Activated B cell treated with CpG ODN at 0.5 μM for 24 hours (primary cell): ENCODE measurements at regions of chr21 and their contacts with region 1.

Region 1: GRCh38 chr21:45478115-45478801 is 64.0 kb downstream of the SLC19A1 start:
- DNase-seq: peak; percentile 64
- ATAC-seq: peak; percentile 87
- H3K4me3 Mint-ChIP-seq: peak overlapping the region; percentile 73
- H3K27ac Mint-ChIP-seq: peak overlapping the region; percentile 85
- H3K4me1 Mint-ChIP-seq: peaks cover 40% of the 10 kb centered on the region
- H3K27me3 Mint-ChIP-seq: no peaks in the 10 kb centered on the region
- CTCF ChIP-seq: no peak

Region 2: DNA sequence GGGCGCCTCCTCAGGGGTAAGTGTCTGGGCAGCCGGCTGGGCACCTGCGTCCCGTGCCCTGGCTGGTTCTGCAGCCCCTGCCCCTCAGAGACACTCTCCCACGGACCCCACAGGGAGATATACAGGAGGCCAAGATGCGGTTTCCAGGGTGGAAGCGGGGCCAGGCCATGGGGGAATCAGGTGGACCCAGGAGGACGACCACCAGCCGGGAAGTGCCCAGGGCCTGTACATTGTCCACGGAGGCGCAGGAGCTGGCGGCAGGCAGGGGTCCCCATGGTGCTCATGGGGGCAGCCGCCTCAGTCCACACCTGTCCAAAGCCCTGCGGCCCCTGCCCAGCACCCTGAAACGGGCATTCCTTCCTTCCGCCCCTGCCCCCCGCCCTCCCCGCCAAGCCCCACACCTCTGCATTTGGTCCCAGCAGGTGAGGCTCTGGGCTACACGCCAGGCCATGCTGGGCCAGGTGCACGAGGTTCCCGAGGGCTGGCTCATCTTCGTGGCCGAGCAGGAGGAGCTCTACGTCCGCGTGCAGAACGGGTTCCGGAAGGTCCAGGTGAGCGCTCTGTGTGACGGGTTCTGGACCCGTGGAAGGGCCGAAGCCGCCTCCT is 27.3 kb after region 1 on chr21:
- CTCF ChIA-PET with region 1: no interaction called
- POLR2A ChIA-PET with region 1: no interaction called
- intact Hi-C with region 1: no loop called
- DNase-seq: no peak
- ATAC-seq: no peak
- H3K4me3 Mint-ChIP-seq: no peak overlapping the region
- H3K27ac Mint-ChIP-seq: no peak overlapping the region
- H3K4me1 Mint-ChIP-seq: no peaks in the 10 kb centered on the region
- H3K27me3 Mint-ChIP-seq: no peaks in the 10 kb centered on the region
- CTCF ChIP-seq: no peak

Region 3: GRCh38 chr21:45542242-45542666 is 64.0 kb after region 1 on chr21 and contains the start of gene SLC19A1:
- CTCF ChIA-PET with region 1: no interaction called
- POLR2A ChIA-PET with region 1: no interaction called
- intact Hi-C with region 1: loop called (anchors 5 kb)
- DNase-seq: peak; percentile 81
- ATAC-seq: peak; percentile 94
- H3K4me3 Mint-ChIP-seq: peak within 1 kb of the TSS; percentile 77
- H3K27ac Mint-ChIP-seq: no peak within 1 kb of the TSS
- H3K4me1 Mint-ChIP-seq: peaks cover 4% of the 10 kb centered on the region
- H3K27me3 Mint-ChIP-seq: no peaks in the 10 kb centered on the region
- CTCF ChIP-seq: no peak
- total RNA-seq, gene SLC19A1: 7.4 and 10.7 TPM in 2 replicates

Region 4: DNA sequence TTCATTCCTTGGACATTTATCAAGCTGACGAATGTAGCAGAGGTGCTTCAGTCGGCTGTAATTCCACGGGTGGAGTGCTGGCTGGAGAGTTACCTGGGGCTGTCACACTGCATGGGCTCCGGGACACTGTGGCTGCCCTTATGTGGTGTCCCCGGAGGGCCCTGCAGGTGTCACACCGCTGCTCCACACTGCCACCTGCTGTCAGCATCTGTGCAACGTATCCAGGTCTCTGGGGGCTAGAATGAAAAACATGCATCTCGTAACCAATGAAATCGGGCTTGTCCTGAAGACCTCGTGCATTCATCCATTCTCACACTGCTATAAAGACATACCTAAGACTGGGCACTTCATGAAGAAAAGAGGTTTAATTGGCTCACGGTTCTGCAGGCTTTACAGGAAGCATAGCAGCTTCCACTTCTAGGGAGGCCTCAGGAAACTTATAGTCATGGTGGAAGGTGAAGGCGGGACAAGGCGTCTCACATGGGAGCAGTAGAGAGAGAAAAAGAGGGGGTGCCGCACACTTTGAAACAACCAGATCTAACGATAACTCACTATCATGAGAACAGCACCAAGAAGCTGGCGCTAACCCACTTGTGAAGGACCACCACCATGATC is 118.6 kb after region 1 on chr21:
- CTCF ChIA-PET with region 1: interaction called, 12 read pairs
- POLR2A ChIA-PET with region 1: no interaction called
- intact Hi-C with region 1: loop called (anchors 1 kb)
- DNase-seq: peak; percentile 74
- ATAC-seq: peak; percentile 82
- H3K4me3 Mint-ChIP-seq: no peak overlapping the region
- H3K27ac Mint-ChIP-seq: no peak overlapping the region
- H3K4me1 Mint-ChIP-seq: peaks cover 10% of the 10 kb centered on the region
- H3K27me3 Mint-ChIP-seq: peaks cover 13% of the 10 kb centered on the region
- CTCF ChIP-seq: no peak

Region 5: GRCh38 chr21:45820171-45821091 is 342.2 kb after region 1 on chr21:
- CTCF ChIA-PET with region 1: interaction called, 5 read pairs
- POLR2A ChIA-PET with region 1: no interaction called
- intact Hi-C with region 1: loop called (anchors 1 kb)
- DNase-seq: peak; percentile 60
- ATAC-seq: peak; percentile 73
- H3K4me3 Mint-ChIP-seq: no peak overlapping the region
- H3K27ac Mint-ChIP-seq: no peak overlapping the region
- H3K4me1 Mint-ChIP-seq: peaks cover 3% of the 10 kb centered on the region
- H3K27me3 Mint-ChIP-seq: peaks cover 23% of the 10 kb centered on the region
- CTCF ChIP-seq: no peak

Region 6: GRCh38 chr21:45880097-45881068 is 402.1 kb after region 1 on chr21:
- CTCF ChIA-PET with region 1: no interaction called
- POLR2A ChIA-PET with region 1: no interaction called
- intact Hi-C with region 1: loop called (anchors 1 kb)
- DNase-seq: no peak
- ATAC-seq: peak; percentile 66
- H3K4me3 Mint-ChIP-seq: no peak overlapping the region
- H3K27ac Mint-ChIP-seq: no peak overlapping the region
- H3K4me1 Mint-ChIP-seq: peaks cover 5% of the 10 kb centered on the region
- H3K27me3 Mint-ChIP-seq: peaks cover 4% of the 10 kb centered on the region
- CTCF ChIP-seq: no peak

Region 7: GRCh38 chr21:45923146-45923545 is 444.9 kb after region 1 on chr21:
- CTCF ChIA-PET with region 1: no interaction called
- POLR2A ChIA-PET with region 1: no interaction called
- intact Hi-C with region 1: loop called (anchors 2 kb)
- DNase-seq: no peak
- ATAC-seq: peak; percentile 50
- H3K4me3 Mint-ChIP-seq: no peak overlapping the region
- H3K27ac Mint-ChIP-seq: no peak overlapping the region
- H3K4me1 Mint-ChIP-seq: peaks cover 2% of the 10 kb centered on the region
- H3K27me3 Mint-ChIP-seq: no peaks in the 10 kb centered on the region
- CTCF ChIP-seq: no peak